ENCODE measurements at regions of chr4 and their contacts with region 1.

Region 1: DNA sequence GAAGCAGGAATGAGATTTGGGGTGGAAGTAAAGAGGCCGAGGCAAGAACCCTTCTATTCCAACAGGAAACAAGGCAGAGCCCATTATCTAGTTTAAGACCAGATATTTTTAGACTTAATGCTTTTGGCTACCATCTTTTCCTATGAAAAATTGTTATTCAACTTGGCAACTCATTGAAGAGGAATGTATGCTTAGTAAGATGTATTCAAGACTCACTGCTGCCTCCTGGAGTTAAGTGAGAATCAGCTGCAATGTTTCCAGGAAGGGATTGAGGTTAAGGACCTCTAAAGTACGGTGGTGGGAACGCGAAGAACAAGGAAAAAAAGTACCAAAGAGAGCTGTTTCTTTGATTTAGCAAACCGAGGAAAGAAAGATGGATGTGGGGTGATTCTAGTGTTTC is 89.1 kb downstream of the RAPGEF2 start:
- DNase-seq: no peak
- ATAC-seq: peak in 2 of 4 donors; percentile 44 to 47
- H3K4me3 ChIP-seq: no peak overlapping the region
- H3K27ac ChIP-seq: no peak overlapping the region
- H3K4me1 ChIP-seq: peaks cover 0 to 16% (median 0%) of the 10 kb centered on the region in 3 donors
- H3K27me3 ChIP-seq: no peaks in the 10 kb centered on the region
- CTCF ChIP-seq: no peak

Region 2: DNA sequence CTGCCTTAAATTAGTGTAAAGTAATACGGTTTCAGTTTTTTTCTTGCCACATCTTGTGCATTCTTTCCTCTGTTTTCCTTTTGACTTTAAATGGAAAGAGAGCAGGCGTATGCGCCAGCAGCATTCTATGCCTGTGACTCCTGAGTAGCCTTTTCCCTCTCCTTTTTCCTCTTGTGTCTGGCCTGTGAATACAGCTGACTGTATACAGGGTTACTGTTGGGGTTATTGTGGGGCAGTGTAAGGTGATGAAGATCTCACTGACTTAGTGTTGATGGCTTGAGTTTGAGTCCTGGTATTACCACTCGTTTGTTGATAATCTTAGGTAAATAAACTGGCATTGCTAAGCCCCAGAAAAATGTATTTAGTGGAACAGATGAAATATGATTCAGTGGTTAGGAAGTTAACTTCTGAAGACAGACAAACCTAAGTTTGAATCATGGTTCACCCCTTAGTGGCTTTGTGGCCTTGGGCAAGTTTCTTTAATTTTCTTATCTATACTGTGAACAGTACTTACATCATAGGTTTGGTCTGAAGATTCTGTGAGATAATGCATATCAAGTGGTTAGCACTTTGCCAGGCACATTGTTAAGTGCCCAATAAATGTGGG is 318.1 kb before region 1 on chr4:
- intact Hi-C with region 1: loop called in 1 of 3 experiments (anchors 10 kb)
- DNase-seq: no peak
- ATAC-seq: peak in 2 of 4 donors; percentile 15 to 55
- H3K4me3 ChIP-seq: no peak overlapping the region
- H3K27ac ChIP-seq: no peak overlapping the region
- H3K4me1 ChIP-seq: peaks cover 3 to 9% (median 3%) of the 10 kb centered on the region in 3 donors
- H3K27me3 ChIP-seq: no peaks in the 10 kb centered on the region
- CTCF ChIP-seq: no peak

Region 3: DNA sequence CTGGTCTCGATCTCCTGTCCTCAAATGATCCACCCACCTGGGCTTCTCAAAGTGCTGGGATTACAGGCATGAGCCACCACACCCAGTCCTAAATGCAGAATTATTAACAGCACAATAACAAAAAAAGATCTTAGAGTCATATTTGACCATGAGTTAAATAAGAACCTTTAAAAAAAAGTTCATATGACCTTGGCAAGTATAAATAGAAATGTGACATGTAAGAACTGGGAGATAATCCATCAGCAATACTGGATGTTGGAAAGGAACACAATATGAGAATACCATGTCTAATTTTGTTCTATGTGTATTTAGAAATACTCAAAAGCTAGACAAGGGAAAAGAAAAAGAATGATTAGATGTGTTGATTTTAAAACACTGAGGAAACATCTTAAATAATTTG is 142.5 kb after region 1 on chr4:
- intact Hi-C with region 1: no loop called
- DNase-seq: no peak
- ATAC-seq: no peak
- H3K4me3 ChIP-seq: no peak overlapping the region
- H3K27ac ChIP-seq: no peak overlapping the region
- H3K4me1 ChIP-seq: no peaks in the 10 kb centered on the region
- H3K27me3 ChIP-seq: no peaks in the 10 kb centered on the region
- CTCF ChIP-seq: no peak